ENCODE measurements at regions of chr2 and their contacts with region 1.

Region 1: GRCh38 chr2:11688222-11689069 is 18.5 kb upstream of the NTSR2 start:
- DNase-seq: peak; percentile 88

Region 2: GRCh38 chr2:11498543-11499080 is 189.8 kb before region 1 on chr2:
- in situ Hi-C with region 1: no loop called
- DNase-seq: peak; percentile 70

Region 3: DNA sequence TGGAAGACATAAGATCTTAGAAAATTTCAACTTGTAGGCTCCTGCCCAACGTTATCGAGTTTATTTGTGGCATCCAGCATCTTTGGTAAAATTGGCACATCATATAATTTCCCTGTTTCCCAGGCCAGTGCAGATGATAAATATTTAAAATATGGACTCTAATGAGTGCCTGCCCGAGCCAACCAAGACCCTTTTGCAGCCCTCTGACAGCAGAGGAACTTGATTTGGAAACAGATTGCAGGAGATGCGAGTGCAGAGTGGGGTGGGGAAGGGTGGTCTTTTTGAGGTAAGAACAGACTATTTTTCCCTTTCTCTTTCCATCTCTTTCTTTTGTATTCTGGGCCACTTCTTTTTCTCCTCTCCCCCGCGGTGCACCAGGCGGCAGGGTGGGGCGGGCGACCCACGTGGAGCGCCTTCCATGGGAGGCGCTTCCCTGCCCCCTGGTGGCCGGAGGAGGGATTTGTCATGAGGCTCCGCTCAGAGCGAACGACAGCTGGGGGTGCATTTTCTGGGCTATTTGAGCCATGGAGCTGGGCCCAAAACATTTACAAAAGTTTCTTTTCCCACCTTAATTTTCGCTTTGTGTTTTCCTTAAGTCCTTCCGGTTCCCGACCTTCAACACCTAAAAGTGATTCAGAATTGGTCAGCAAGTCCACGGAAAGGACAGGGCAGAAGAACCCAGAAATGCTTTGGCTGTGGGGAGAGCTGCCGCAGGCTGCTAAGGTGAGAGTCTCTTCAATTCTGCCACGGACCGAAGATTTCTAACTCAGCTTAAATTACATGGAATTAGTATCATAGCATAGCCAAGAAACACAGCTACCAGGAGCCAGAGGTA is 90.7 kb after region 1 on chr2:
- in situ Hi-C with region 1: loop called (anchors 25 kb)
- DNase-seq: peak; percentile 81

Measured in SK-MEL-5 (cell line).